HepG2 (cell line): ENCODE measurements at regions of chr10 and their contacts with region 1.

Region 1: GRCh38 chr10:87734987-87735827 is 75.5 kb downstream of the PAPSS2 start:
- DNase-seq: peak; percentile 25
- ATAC-seq: peak; percentile 92
- H3K4me3 ChIP-seq: no peak overlapping the region
- H3K27ac ChIP-seq: no peak overlapping the region
- H3K4me1 ChIP-seq: peaks cover 4% of the 10 kb centered on the region
- H3K27me3 ChIP-seq: no peaks in the 10 kb centered on the region; a peak in 1 of 5 replicates
- CTCF ChIP-seq: peak; percentile 78
- EP300 ChIP-seq: no peak
- POLR2A ChIP-seq: no peak
- RAD21 ChIP-seq: peak; percentile 48; the same call in 1 of the 2 replicates

Region 2: DNA sequence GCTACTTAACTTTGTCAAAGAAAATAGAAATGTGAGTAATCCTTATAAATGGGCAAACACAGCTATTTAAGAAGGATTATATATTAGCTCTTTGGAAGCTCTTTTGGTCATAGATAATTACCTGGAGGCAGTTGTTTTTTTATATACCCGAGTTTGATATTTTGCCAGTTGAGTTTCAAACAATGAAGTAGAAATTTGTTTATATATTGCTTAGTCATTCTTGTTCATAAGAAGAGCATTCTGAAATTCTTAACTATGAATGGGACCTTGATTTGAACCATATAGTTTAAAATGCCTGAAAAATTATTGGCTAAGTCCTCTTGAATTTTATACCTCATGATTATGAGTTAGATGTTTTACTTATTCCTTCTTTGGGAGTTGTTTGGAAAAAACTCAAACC is 194.1 kb before region 1 on chr10:
- CTCF ChIA-PET with region 1: no interaction called
- POLR2A ChIA-PET with region 1: no interaction called
- in situ Hi-C with region 1: loop called (anchors 5 kb)
- intact Hi-C with region 1: no loop called
- DNase-seq: no peak
- ATAC-seq: no peak
- H3K4me3 ChIP-seq: no peak overlapping the region
- H3K27ac ChIP-seq: no peak overlapping the region
- H3K4me1 ChIP-seq: no peaks in the 10 kb centered on the region
- H3K27me3 ChIP-seq: no peaks in the 10 kb centered on the region
- CTCF ChIP-seq: no peak
- EP300 ChIP-seq: no peak
- POLR2A ChIP-seq: no peak
- RAD21 ChIP-seq: no peak

Region 3: GRCh38 chr10:87659571-87660483 is 75.4 kb before region 1 on chr10 and contains the start of gene PAPSS2:
- CTCF ChIA-PET with region 1: interaction called, 7 read pairs
- POLR2A ChIA-PET with region 1: no interaction called
- in situ Hi-C with region 1: loop called (anchors 5 kb)
- intact Hi-C with region 1: loop called (anchors 1 kb)
- DNase-seq: no peak
- ATAC-seq: peak; percentile 75
- H3K4me3 ChIP-seq: peak within 1 kb of the TSS; percentile 61 to 70 (median 64)
- H3K27ac ChIP-seq: no peak within 1 kb of the TSS
- H3K4me1 ChIP-seq: peaks cover 27% of the 10 kb centered on the region
- H3K27me3 ChIP-seq: peaks cover 5 to 31% of the 10 kb centered on the region in 2 experiments; a peak in 4 of 5 replicates
- CTCF ChIP-seq: no peak
- EP300 ChIP-seq: no peak
- POLR2A ChIP-seq: no peak
- RAD21 ChIP-seq: no peak
- total RNA-seq, gene PAPSS2: 0.11 and 0.17 TPM in 2 replicates